HAP-1 (cell line): ENCODE measurements at regions of chr22 and their contacts with region 1.

Region 1: DNA sequence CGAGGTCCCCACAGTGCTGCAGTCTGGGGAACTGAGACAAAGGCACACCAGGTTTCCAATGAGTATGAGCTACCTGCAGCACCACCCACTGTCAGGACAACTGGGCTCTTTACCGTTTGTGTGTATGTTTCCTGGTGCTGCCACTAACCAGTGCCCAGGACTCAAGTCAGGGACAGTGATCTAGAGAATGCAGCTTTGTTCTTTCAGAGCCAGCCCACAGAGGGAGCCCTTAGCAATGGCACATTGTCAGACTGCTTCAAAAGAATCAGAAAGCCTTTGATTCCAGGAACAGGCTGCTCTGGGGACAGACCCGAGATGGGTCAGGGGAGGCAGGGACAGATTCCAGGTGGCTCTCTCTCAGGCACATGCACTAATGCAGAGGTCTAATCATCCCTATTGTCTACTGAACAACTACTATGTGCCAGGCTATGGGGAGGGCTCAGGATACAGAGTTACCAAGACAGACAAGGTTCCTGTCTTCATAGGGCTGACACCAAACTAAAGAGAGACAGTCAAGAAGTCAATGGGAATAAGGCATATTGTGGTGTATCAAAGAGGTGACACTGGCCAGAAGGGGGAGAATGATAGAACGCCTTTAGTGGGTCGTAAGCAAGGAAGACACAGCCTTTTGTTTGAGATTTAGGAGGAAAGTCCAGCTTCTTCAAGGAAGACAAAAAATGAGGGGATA is 103.7 kb downstream of the VPREB1 start:
- DNase-seq: peak in 1 of 2 experiments; percentile 18
- H3K4me3 ChIP-seq: no peak overlapping the region
- H3K4me1 ChIP-seq: no peaks in the 10 kb centered on the region
- H3K27me3 ChIP-seq: peaks cover 36% of the 10 kb centered on the region

Region 2: DNA sequence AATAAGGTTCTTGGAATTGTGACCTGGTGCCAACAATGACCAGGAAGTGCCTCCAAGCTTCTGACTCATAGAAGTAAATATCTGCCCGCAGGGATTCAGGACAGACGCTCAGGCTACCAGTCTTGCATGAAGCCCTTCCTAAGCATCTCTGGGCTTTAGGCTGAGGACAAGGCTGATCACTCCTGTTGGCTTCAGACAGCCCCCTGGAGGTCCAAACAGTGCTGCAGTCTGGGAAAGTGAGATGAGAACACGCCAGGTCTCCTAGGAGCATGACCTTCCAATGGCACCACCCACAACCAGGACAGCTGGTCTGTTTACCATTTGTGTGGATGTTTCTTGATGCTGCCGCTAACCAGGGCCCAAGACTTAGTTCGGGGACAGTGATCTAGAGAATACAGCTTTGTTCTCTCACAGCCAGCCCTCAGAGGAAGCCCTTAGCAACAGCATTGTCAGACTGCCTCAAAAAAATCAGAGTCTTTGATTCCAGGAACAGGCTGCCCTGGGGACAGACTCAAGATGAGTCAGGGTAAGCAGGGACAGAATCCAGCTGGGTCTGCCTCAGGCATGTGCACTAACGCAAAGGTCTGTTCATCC is 49.1 kb after region 1 on chr22:
- in situ Hi-C with region 1: loop called (anchors 5 kb)
- DNase-seq: no peak
- H3K4me3 ChIP-seq: no peak overlapping the region
- H3K4me1 ChIP-seq: no peaks in the 10 kb centered on the region
- H3K27me3 ChIP-seq: peaks cover 3% of the 10 kb centered on the region; the same call in 1 of the 2 replicates